MCF 10A (cell line): ENCODE measurements at regions of chrX and their contacts with region 1.

Region 1: GRCh38 chrX:15299941-15300851 is 15.2 kb downstream of the ASB11 start:
- DNase-seq: peak; percentile 33
- H3K4me3 Mint-ChIP-seq: no peak overlapping the region
- H3K27ac Mint-ChIP-seq: no peak overlapping the region
- H3K4me1 Mint-ChIP-seq: no peaks in the 10 kb centered on the region
- H3K27me3 Mint-ChIP-seq: peaks cover 20% of the 10 kb centered on the region
- CTCF ChIP-seq: peak; percentile 38

Region 2: GRCh38 chrX:14777525-14777924 is 522.7 kb before region 1 on chrX:
- CTCF ChIA-PET with region 1: no interaction called
- POLR2A ChIA-PET with region 1: no interaction called
- intact Hi-C with region 1: no loop called
- DNase-seq: peak; percentile 52
- H3K4me3 Mint-ChIP-seq: no peak overlapping the region
- H3K27ac Mint-ChIP-seq: no peak overlapping the region
- H3K4me1 Mint-ChIP-seq: peaks cover 10% of the 10 kb centered on the region
- H3K27me3 Mint-ChIP-seq: peaks cover 26% of the 10 kb centered on the region
- CTCF ChIP-seq: no peak

Region 3: DNA sequence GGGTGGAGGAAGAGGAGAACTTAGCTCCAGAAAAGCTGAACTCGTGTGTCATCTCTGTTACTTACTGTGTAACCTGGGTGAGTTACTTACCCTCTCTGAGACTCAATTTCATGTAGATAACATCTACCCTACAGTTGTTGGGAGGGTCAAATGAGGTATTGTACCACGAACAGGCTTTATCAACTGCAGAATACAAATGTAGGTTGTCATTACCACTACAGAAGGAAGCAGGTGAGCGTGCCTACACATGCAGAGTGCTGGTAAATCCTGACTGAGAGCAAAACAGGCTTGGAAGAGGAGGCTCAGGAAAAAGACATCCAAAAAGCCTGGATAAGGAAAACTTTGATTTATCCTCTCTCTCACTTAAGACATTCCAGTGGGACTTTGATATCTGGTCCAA is 27.9 kb after region 1 on chrX:
- CTCF ChIA-PET with region 1: interaction called, 15 read pairs
- POLR2A ChIA-PET with region 1: interaction called, 3 read pairs
- intact Hi-C with region 1: no loop called
- DNase-seq: no peak
- H3K4me3 Mint-ChIP-seq: no peak overlapping the region
- H3K27ac Mint-ChIP-seq: no peak overlapping the region
- H3K4me1 Mint-ChIP-seq: peaks cover 5% of the 10 kb centered on the region
- H3K27me3 Mint-ChIP-seq: peaks cover 32% of the 10 kb centered on the region
- CTCF ChIP-seq: no peak

Region 4: DNA sequence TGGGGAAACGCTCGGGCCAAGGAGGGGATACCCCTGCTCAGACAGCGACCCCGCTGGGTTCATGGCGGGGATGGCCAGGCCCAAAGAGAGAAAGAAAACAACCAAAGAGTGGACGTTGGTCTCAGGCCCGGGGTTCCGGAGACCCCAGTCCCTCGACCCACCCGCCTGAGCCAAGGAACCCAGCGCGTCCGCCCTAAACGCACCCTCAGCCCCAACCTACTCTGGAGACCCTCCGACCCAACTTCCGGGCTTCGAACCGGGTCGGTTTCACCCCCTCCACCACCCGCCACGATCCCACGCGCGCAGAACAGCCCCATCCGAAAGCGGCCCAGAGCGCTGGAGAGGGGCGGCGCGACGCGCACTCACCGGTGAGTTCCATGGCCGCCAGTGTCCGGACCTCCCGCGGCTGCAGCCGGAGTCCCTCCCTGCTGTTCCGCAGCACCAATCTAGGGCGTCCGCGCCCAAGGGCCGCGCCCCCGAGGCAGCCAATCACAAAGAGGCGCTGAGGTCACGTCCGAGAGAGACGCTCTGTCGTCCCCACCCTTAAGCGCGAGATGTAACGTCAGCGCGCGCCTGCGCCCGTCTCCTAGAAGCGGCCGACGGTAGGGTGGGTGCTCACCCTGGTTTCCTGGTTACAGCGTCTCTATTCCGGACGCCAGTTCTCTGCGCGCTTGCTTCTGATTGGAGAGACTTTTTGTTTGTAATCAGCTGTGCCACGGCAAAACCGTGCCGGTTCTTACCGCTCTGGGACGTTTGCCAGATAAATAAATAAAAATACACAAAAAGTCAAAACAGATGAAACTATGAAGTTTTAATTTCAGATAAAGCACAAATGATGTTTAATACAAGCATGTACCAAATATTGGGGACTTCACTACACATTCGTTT is 35.2 kb after region 1 on chrX and contains the start of gene PIGA:
- CTCF ChIA-PET with region 1: interaction called, 13 read pairs
- POLR2A ChIA-PET with region 1: no interaction called
- intact Hi-C with region 1: loop called (anchors 5 kb)
- DNase-seq: peak; percentile 94
- H3K4me3 Mint-ChIP-seq: peak within 1 kb of the TSS; percentile 80
- H3K27ac Mint-ChIP-seq: peak within 1 kb of the TSS; percentile 88
- H3K4me1 Mint-ChIP-seq: peaks cover 5% of the 10 kb centered on the region
- H3K27me3 Mint-ChIP-seq: peaks cover 45% of the 10 kb centered on the region
- CTCF ChIP-seq: no peak
- total RNA-seq, gene PIGA: 17.3 and 22.7 TPM in 2 replicates